Activated CD4-positive, alpha-beta memory T cell treated with anti-CD3 and anti-CD28 coated beads, Interleukin-2, amount 10 ng/mL, durations not matched to agents 7 days and 5 days (primary cell): ENCODE measurements at regions of chr6 and their contacts with region 1.

Region 1: DNA sequence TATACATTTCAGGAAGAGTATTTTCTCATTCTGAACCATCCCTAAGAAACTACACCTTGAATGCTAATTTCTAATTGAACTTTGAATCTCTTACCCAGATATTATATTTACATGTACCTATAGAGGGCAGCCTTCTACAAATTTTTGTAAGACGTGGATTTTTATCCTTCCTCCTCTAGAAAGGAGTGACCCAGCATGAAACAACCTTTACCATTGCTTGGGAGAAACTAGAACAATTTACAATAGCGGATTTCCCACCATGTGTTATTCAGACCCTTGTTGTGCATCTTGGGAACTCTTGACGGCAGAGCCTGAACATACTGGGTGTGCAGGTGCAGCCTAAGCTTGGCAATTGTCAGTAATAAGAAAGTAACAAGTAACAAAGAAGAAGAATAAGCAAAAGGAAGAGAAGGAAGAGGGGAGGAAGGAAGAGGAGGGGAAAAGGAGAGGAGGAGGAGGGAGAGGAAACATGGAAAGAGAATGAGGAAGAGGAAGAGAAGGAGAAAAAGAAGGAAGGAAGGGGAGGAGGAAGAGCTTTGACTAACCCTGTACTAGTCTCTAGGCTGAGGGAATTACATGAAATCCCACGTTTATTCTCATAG is 10.8 kb upstream of the TAAR1 start:
- DNase-seq: no peak
- H3K4me3 Mint-ChIP-seq: no peak overlapping the region
- H3K27ac Mint-ChIP-seq: no peak overlapping the region
- H3K4me1 Mint-ChIP-seq: peaks cover 9% of the 10 kb centered on the region
- H3K27me3 Mint-ChIP-seq: peaks cover 11% of the 10 kb centered on the region

Region 2: GRCh38 chr6:132659082-132659481 is 10.7 kb before region 1 on chr6 and contains the start of gene TAAR1:
- CTCF ChIA-PET with region 1: interaction called, 12 read pairs
- POLR2A ChIA-PET with region 1: no interaction called
- DNase-seq: no peak
- H3K4me3 Mint-ChIP-seq: no peak within 1 kb of the TSS
- H3K27ac Mint-ChIP-seq: no peak within 1 kb of the TSS
- H3K4me1 Mint-ChIP-seq: no peaks in the 10 kb centered on the region
- H3K27me3 Mint-ChIP-seq: peaks cover 12% of the 10 kb centered on the region
- total RNA-seq, gene TAAR1: not detected

Region 3: DNA sequence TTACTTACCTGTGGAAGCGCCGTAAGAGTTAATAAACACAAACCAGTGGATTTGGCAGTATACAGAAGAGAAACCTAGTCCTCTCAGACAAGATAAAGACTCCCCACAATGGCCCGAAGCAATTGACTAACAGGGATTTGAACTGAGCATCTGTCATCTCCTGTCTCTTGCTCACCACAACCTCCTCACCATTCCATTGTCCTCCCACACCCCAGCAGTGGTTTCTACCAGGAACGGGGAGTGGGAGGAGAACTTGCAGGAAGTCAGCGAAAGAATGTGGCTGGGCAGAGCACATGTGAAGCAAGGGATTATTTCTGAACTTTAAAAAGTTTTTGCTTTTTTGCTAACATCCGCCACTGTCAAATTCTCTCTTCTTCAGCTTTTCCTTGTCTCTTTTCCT is 13.8 kb after region 1 on chr6:
- CTCF ChIA-PET with region 1: interaction called, 12 read pairs
- POLR2A ChIA-PET with region 1: no interaction called
- DNase-seq: no peak
- H3K4me3 Mint-ChIP-seq: no peak overlapping the region
- H3K27ac Mint-ChIP-seq: no peak overlapping the region
- H3K4me1 Mint-ChIP-seq: peaks cover 15% of the 10 kb centered on the region
- H3K27me3 Mint-ChIP-seq: peaks cover 24% of the 10 kb centered on the region

Region 4: DNA sequence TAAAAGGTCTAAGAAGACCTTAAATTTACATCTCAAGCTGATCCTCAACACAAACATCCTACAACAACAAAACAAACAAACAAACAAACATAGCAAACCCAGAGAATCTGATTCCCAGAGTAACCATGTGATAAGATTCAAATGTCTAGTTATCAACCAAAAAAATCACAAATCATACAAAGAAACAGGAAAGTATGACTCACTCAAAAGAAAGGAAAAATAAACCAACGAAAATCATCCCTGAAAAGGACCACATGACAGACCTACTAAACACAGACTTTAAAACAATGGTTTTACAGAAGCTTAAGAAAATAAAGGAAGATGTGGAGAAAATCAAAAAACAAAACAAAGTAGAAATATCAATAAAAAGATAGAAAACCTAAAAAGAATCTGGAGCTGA is 26.0 kb after region 1 on chr6:
- CTCF ChIA-PET with region 1: no interaction called
- POLR2A ChIA-PET with region 1: no interaction called
- DNase-seq: no peak
- H3K4me3 Mint-ChIP-seq: no peak overlapping the region
- H3K27ac Mint-ChIP-seq: no peak overlapping the region
- H3K4me1 Mint-ChIP-seq: peaks cover 10% of the 10 kb centered on the region
- H3K27me3 Mint-ChIP-seq: peaks cover 18% of the 10 kb centered on the region

Region 5: GRCh38 chr6:132768051-132768517 is 98.3 kb after region 1 on chr6:
- CTCF ChIA-PET with region 1: interaction called, 34 read pairs
- POLR2A ChIA-PET with region 1: interaction called, 9 read pairs
- DNase-seq: peak; percentile 21
- H3K4me3 Mint-ChIP-seq: no peak overlapping the region
- H3K27ac Mint-ChIP-seq: no peak overlapping the region
- H3K4me1 Mint-ChIP-seq: peaks cover 14% of the 10 kb centered on the region
- H3K27me3 Mint-ChIP-seq: no peaks in the 10 kb centered on the region

Region 6: GRCh38 chr6:132798869-132799538 is 129.2 kb after region 1 on chr6:
- CTCF ChIA-PET with region 1: interaction called, 55 read pairs
- POLR2A ChIA-PET with region 1: interaction called, 3 read pairs
- DNase-seq: peak; percentile 71
- H3K4me3 Mint-ChIP-seq: peak overlapping the region; percentile 88
- H3K27ac Mint-ChIP-seq: no peak overlapping the region
- H3K4me1 Mint-ChIP-seq: peaks cover 15% of the 10 kb centered on the region
- H3K27me3 Mint-ChIP-seq: peaks cover 5% of the 10 kb centered on the region

Region 7: DNA sequence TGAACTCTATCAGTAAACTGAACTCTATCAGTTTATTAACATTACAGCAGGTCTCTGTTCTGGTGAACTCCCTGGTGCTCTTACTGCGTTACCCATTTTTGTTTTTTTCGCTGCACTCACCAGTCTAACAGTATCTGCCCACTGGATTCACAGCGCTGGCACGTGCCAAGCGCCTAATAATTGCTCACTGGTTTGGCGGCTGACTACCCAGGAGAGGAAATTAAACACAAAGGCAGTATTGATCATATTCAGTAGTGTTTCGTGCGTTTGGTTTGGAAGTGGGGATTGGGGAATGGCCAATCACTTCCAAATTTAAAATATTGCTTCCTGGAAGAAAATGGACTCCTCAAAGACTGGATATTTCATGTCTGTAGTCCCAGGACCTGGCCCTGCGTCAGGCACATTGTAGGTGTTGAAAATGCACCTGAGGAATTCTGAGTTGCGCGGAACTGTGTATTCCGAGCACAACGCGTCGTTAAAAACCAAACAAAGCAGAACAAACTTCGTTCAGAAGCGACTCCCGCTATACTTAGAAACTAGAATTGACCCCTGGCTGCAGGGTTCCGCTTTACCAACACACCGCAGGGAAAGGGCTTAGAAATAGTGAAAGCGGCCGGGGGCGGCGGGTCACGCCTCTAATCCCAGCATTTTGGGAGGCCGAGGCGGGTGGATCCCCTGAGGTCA is 143.5 kb after region 1 on chr6:
- CTCF ChIA-PET with region 1: interaction called, 4 read pairs
- POLR2A ChIA-PET with region 1: interaction called, 11 read pairs
- DNase-seq: peak; percentile 44
- H3K4me3 Mint-ChIP-seq: peak overlapping the region; percentile 96
- H3K27ac Mint-ChIP-seq: peak overlapping the region; percentile 99
- H3K4me1 Mint-ChIP-seq: peaks cover 42% of the 10 kb centered on the region
- H3K27me3 Mint-ChIP-seq: peaks cover 13% of the 10 kb centered on the region

Region 8: DNA sequence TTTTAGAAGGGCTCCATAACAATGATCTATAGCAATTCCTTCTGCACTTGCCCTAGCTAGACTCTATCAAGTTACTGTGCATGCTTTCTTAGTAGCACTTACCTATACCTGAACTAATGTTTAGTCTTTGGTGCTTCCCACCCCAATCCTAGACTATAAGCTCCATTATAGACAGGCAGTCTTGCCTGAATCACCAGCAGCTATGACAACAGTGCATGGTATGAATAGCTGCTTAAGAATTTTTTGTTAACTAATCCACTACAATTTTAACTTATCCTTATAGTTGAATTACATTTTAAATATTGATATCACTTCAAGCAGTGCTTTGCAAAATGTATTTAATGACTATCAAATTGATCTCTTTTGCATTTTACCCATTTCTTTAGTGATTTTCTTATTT is 308.9 kb after region 1 on chr6:
- CTCF ChIA-PET with region 1: no interaction called
- POLR2A ChIA-PET with region 1: no interaction called
- DNase-seq: no peak
- H3K4me3 Mint-ChIP-seq: no peak overlapping the region
- H3K27ac Mint-ChIP-seq: no peak overlapping the region
- H3K4me1 Mint-ChIP-seq: no peaks in the 10 kb centered on the region
- H3K27me3 Mint-ChIP-seq: peaks cover 12% of the 10 kb centered on the region